ENCODE measurements at regions of chr16 and their contacts with region 1.

Region 1: DNA sequence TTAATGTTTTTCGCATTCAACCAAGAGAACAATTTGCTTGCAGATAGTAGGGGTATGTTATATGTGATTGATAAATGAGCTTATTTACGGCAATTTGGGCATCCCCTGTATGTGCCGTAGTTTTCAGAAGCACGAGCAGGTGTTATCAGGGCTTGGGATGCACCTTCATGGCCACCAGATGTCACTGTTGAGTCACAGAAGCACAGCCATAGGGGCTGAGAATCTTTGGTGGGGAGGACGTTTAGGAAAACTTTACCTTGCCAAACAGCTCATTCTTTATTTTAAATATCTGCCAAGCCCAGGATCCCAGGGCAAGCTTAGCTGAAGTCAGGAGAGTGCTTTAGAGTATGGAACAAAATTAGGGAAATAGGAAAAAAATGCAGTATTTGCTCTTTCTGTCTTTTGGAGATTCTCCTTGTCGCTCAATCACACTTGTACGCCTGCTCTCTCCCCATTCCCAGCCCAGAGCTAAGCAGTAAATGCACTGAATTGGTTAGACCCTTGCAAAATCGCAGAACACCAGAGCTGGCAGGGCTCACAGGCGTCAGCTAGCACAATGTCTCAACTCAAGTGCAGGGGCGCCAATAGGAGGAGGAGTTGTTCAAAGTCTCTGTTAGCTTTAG is 93.6 kb upstream of the MPHOSPH6 start:
- DNase-seq: peak in 1 of 2 experiments; percentile 27
- H3K4me3 ChIP-seq: no peak overlapping the region
- H3K27ac ChIP-seq: no peak overlapping the region
- H3K4me1 ChIP-seq: no peaks in the 10 kb centered on the region
- H3K27me3 ChIP-seq: peaks cover 56% of the 10 kb centered on the region
- CTCF ChIP-seq: peak; percentile 94

Region 2: GRCh38 chr16:81855552-81856153 is 408.0 kb before region 1 on chr16:
- CTCF ChIA-PET with region 1: no interaction called
- POLR2A ChIA-PET with region 1: no interaction called
- intact Hi-C with region 1: no loop called
- DNase-seq: no peak
- H3K4me3 ChIP-seq: no peak overlapping the region
- H3K27ac ChIP-seq: no peak overlapping the region
- H3K4me1 ChIP-seq: peaks cover 12% of the 10 kb centered on the region; the same call in 1 of the 2 replicates
- H3K27me3 ChIP-seq: no peaks in the 10 kb centered on the region
- CTCF ChIP-seq: no peak

Region 3: DNA sequence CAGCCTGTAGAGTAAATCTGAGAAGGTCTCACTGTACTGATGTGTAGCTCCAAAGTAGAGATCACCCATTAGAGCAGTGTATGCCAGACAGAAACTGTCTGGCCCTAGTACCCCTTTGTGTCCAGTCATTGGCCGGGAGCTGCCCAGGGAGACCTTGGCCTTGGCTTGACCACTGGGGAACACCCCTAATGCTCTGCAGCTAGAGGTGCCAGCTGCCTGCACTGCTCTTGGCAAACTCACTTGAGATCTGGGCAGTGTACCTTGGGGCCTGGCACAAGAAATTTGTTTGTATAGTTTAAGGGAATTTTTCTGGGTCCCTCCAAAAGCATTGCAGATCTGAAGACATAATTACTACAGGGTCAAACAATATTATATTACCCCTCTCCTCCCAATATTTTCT is 15.0 kb before region 1 on chr16:
- CTCF ChIA-PET with region 1: no interaction called
- POLR2A ChIA-PET with region 1: no interaction called
- intact Hi-C with region 1: no loop called
- DNase-seq: no peak
- H3K4me3 ChIP-seq: no peak overlapping the region
- H3K27ac ChIP-seq: no peak overlapping the region
- H3K4me1 ChIP-seq: no peaks in the 10 kb centered on the region
- H3K27me3 ChIP-seq: peaks cover 41% of the 10 kb centered on the region; the same call in 1 of the 2 replicates
- CTCF ChIP-seq: no peak

Region 4: GRCh38 chr16:82456683-82457082 is 193.1 kb after region 1 on chr16:
- CTCF ChIA-PET with region 1: interaction called, 4 read pairs
- POLR2A ChIA-PET with region 1: no interaction called
- intact Hi-C with region 1: loop called (anchors 2 kb)
- DNase-seq: peak; percentile 25 to 50
- H3K4me3 ChIP-seq: no peak overlapping the region
- H3K27ac ChIP-seq: no peak overlapping the region
- H3K4me1 ChIP-seq: no peaks in the 10 kb centered on the region
- H3K27me3 ChIP-seq: peaks cover 40% of the 10 kb centered on the region
- CTCF ChIP-seq: peak; percentile 74

Region 5: GRCh38 chr16:82639666-82640336 is 376.2 kb after region 1 on chr16:
- CTCF ChIA-PET with region 1: no interaction called
- POLR2A ChIA-PET with region 1: no interaction called
- intact Hi-C with region 1: loop called (anchors 1 kb)
- DNase-seq: peak in 1 of 2 experiments; percentile 4
- H3K4me3 ChIP-seq: no peak overlapping the region
- H3K27ac ChIP-seq: no peak overlapping the region
- H3K4me1 ChIP-seq: no peaks in the 10 kb centered on the region
- H3K27me3 ChIP-seq: peaks cover 9% of the 10 kb centered on the region; the same call in 1 of the 2 replicates
- CTCF ChIP-seq: peak; percentile 80

Region 6: GRCh38 chr16:83878838-83879237 is 1615.2 kb after region 1 on chr16:
- CTCF ChIA-PET with region 1: no interaction called
- POLR2A ChIA-PET with region 1: no interaction called
- intact Hi-C with region 1: loop called (anchors 10 kb)
- DNase-seq: peak in 1 of 2 experiments; percentile 41
- H3K4me3 ChIP-seq: no peak overlapping the region
- H3K27ac ChIP-seq: no peak overlapping the region
- H3K4me1 ChIP-seq: no peaks in the 10 kb centered on the region
- H3K27me3 ChIP-seq: peaks cover 94% of the 10 kb centered on the region
- CTCF ChIP-seq: peak; percentile 72

Measured in PC-9 (cell line).